Left cardiac atrium (tissue), 4 donors: ENCODE measurements at regions of chr13 and their contacts with region 1.

Region 1: DNA sequence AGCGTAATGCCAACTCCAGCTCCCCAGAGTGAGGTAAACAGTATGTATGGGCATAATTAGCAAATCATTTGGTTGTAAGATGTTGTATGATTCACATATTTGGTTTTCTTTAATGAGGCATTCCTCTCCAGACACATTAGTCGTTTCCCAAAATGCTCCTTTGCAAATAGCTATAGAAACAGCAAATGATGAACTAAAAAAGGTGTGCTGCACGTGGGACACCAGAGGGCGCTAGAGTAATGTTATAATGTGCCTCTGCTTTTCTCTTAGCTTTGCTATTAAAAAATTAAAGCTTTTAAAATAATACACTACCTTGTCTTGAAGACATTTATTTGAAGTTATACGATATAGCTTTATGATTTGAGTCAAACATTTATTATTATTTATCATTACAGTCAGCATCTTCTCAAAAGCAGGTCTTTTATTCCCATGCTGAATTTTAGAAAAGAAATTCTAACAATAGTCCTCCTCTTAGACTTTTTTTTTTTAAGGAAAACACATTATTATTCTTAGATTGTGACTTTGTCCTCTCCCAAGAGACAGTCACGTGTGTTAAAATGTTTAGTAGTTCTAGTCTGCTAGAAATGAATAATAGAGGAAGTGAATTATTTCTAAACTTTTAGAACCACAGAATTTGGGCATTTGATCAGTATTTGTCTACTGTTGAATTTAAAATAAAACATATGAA is 121.6 kb upstream of the FRY start:
- DNase-seq: no peak
- ATAC-seq: peak; percentile 60 to 63

Region 2: GRCh38 chr13:32001185-32001768 is 91.3 kb after region 1 on chr13:
- intact Hi-C with region 1: loop called in 1 of 2 experiments (anchors 10 kb)
- DNase-seq: peak; percentile 26
- ATAC-seq: peak; percentile 80 to 82

Region 3: GRCh38 chr13:32310134-32310706 is 400.2 kb after region 1 on chr13:
- intact Hi-C with region 1: loop called (anchors 5 to 10 kb)
- DNase-seq: no peak
- ATAC-seq: peak; percentile 75 to 84

Region 4: DNA sequence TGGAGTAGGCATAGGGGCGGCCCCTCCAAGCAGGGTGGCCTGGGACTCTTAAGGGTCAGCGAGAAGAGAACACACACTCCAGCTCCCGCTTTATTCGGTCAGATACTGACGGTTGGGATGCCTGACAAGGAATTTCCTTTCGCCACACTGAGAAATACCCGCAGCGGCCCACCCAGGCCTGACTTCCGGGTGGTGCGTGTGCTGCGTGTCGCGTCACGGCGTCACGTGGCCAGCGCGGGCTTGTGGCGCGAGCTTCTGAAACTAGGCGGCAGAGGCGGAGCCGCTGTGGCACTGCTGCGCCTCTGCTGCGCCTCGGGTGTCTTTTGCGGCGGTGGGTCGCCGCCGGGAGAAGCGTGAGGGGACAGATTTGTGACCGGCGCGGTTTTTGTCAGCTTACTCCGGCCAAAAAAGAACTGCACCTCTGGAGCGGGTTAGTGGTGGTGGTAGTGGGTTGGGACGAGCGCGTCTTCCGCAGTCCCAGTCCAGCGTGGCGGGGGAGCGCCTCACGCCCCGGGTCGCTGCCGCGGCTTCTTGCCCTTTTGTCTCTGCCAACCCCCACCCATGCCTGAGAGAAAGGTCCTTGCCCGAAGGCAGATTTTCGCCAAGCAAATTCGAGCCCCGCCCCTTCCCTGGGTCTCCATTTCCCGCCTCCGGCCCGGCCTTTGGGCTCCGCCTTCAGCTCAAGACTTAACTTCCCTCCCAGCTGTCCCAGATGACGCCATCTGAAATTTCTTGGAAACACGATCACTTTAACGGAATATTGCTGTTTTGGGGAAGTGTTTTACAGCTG is 405.4 kb after region 1 on chr13 and contains the starts of genes BRCA2 and ZAR1L:
- intact Hi-C with region 1: loop called in 1 of 2 experiments (anchors 10 kb)
- DNase-seq: peak; percentile 94
- ATAC-seq: peak; percentile 98 to 99
- total RNA-seq, gene BRCA2: 1.0 to 2.1 TPM
- total RNA-seq, gene ZAR1L: not detected

Region 5: DNA sequence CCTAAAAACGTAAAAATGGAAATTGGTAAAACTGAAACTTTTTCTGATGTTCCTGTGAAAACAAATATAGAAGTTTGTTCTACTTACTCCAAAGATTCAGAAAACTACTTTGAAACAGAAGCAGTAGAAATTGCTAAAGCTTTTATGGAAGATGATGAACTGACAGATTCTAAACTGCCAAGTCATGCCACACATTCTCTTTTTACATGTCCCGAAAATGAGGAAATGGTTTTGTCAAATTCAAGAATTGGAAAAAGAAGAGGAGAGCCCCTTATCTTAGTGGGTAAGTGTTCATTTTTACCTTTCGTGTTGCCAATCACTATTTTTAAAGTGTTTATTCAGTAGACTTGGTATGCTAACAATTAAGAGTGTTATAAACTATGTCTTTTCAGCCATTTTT is 430.9 kb after region 1 on chr13:
- intact Hi-C with region 1: no loop called
- DNase-seq: no peak
- ATAC-seq: no peak